K562 (cell line): ENCODE measurements at regions of chr16 and their contacts with region 1.

Region 1: GRCh38 chr16:85172455-85173145 is 60.3 kb upstream of the CIBAR2 start:
- DNase-seq: peak; percentile 53 to 69 (median 64)
- ATAC-seq: peak; percentile 36
- H3K4me3 ChIP-seq: peak overlapping the region; percentile 45
- H3K27ac ChIP-seq: peak overlapping the region; percentile 71
- H3K4me1 ChIP-seq: peaks cover 43 to 83% of the 10 kb centered on the region in 2 experiments
- H3K27me3 ChIP-seq: no peaks in the 10 kb centered on the region
- CTCF ChIP-seq: peak; percentile 71 to 96 (median 72)
- EP300 ChIP-seq: no peak
- POLR2A ChIP-seq: no peak
- RAD21 ChIP-seq: peak in 1 of 2 experiments; percentile 9; a peak in 1 of 4 replicates

Region 2: DNA sequence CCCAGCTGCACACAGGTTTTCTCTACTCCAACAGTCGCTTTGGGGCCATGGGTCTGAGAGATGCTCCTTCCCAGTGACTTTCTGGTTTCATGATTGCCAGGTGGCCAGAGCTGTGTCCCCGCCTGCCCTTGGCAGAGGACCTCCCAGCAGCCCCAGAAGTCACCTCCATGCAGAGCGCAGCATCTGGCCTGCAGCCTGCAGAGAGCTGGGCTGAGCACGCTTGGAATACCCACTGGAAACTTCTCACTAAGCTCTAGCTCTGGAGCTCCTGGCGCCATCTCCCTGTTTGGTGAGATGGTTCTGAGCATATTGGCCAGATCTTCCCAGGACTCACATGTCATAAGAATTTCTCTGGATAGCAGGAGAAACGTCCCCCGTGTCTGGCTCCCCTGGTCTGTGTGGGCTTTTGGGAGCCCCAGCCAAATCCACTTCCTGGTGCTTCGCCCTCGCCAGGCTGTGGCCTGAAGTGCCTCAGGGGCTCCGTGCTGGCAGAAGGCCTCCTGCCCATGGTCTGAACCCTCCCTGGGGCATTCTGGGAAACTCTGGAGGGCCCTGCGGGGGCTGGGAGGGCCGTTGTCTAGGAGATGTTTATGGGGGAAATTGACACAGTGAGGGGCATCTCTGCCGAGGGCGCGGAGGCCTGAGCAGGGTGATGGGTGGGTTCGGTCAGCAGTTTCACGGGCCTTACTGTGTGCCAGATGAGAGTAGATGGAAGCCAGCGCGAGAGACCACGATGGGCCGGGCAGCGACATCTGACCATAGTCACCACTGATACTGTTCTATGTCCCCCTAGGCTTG is 12.9 kb after region 1 on chr16:
- CTCF ChIA-PET with region 1: no interaction called
- POLR2A ChIA-PET with region 1: interaction called, 10 read pairs
- in situ Hi-C with region 1: no loop called
- intact Hi-C with region 1: no loop called
- DNase-seq: no peak
- ATAC-seq: no peak
- H3K4me3 ChIP-seq: no peak overlapping the region
- H3K27ac ChIP-seq: no peak overlapping the region
- H3K4me1 ChIP-seq: peaks cover 16 to 41% of the 10 kb centered on the region in 2 experiments
- H3K27me3 ChIP-seq: no peaks in the 10 kb centered on the region
- CTCF ChIP-seq: no peak
- EP300 ChIP-seq: no peak
- POLR2A ChIP-seq: no peak
- RAD21 ChIP-seq: no peak

Region 3: GRCh38 chr16:85206472-85207356 is 34.1 kb after region 1 on chr16:
- CTCF ChIA-PET with region 1: no interaction called
- POLR2A ChIA-PET with region 1: no interaction called
- in situ Hi-C with region 1: no loop called
- intact Hi-C with region 1: no loop called
- DNase-seq: no peak
- ATAC-seq: no peak
- H3K4me3 ChIP-seq: no peak overlapping the region
- H3K27ac ChIP-seq: no peak overlapping the region
- H3K4me1 ChIP-seq: peaks cover 8 to 65% of the 10 kb centered on the region in 2 experiments; a peak in 4 of 5 replicates
- H3K27me3 ChIP-seq: no peaks in the 10 kb centered on the region
- CTCF ChIP-seq: no peak
- EP300 ChIP-seq: no peak
- POLR2A ChIP-seq: no peak
- RAD21 ChIP-seq: no peak